ENCODE measurements at regions of chr17 and their contacts with region 1.

Region 1: GRCh38 chr17:63773381-63774140 is at the start of gene CCDC47:
- DNase-seq: peak; percentile 97 to 99
- ATAC-seq: peak; percentile 94 to 97 (median 97)
- H3K4me3 ChIP-seq: peak within 1 kb of the TSS; percentile 67 to 99 (median 92)
- H3K27ac ChIP-seq: peak within 1 kb of the TSS; percentile 81 to 99 (median 96)
- H3K4me1 ChIP-seq: peaks cover 0 to 74% (median 67%) of the 10 kb centered on the region in 9 donors
- H3K27me3 ChIP-seq: no peaks in the 10 kb centered on the region
- CTCF ChIP-seq: no peak
- total RNA-seq, gene CCDC47: 76.7 to 153 (median 90.6) TPM

Region 2: DNA sequence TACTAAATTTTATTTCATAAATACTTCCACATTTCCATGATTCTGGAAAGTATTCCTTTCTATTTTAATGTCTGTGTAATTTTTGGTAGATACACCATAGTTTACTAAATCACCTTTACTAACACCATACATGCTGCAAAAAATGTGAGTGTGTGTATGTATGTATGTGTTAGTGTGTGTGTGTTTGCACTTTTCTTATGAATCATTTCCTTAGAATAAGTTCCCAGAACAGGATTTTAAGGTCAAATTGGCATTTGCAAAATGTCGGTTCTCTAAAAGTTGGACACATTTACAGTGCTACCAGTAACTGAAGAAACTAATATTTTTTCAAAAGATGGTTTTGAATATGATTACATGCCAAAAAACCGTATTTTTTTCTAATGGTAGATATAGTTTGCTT is 464.5 kb before region 1 on chr17:
- intact Hi-C with region 1: no loop called
- DNase-seq: no peak
- ATAC-seq: no peak
- H3K4me3 ChIP-seq: no peak overlapping the region
- H3K27ac ChIP-seq: no peak overlapping the region
- H3K4me1 ChIP-seq: no peaks in the 10 kb centered on the region
- H3K27me3 ChIP-seq: peaks cover 0 to 6% (median 0%) of the 10 kb centered on the region in 7 donors
- CTCF ChIP-seq: no peak

Region 3: GRCh38 chr17:63741221-63742049 is 32.1 kb before region 1 on chr17 and contains the start of gene STRADA:
- intact Hi-C with region 1: loop called in 1 of 10 experiments (anchors 1 kb)
- DNase-seq: peak; percentile 98 to 99
- ATAC-seq: peak; percentile 99 to 100 (median 100)
- H3K4me3 ChIP-seq: peak within 1 kb of the TSS; percentile 69 to 97 (median 84)
- H3K27ac ChIP-seq: peak within 1 kb of the TSS; percentile 72 to 96 (median 92)
- H3K4me1 ChIP-seq: peaks cover 6 to 22% (median 16%) of the 10 kb centered on the region in 9 donors
- H3K27me3 ChIP-seq: no peaks in the 10 kb centered on the region
- CTCF ChIP-seq: peak in 1 of 9 donors; percentile 19
- total RNA-seq, gene STRADA: 12.2 to 19.0 (median 17.7) TPM

Region 4: DNA sequence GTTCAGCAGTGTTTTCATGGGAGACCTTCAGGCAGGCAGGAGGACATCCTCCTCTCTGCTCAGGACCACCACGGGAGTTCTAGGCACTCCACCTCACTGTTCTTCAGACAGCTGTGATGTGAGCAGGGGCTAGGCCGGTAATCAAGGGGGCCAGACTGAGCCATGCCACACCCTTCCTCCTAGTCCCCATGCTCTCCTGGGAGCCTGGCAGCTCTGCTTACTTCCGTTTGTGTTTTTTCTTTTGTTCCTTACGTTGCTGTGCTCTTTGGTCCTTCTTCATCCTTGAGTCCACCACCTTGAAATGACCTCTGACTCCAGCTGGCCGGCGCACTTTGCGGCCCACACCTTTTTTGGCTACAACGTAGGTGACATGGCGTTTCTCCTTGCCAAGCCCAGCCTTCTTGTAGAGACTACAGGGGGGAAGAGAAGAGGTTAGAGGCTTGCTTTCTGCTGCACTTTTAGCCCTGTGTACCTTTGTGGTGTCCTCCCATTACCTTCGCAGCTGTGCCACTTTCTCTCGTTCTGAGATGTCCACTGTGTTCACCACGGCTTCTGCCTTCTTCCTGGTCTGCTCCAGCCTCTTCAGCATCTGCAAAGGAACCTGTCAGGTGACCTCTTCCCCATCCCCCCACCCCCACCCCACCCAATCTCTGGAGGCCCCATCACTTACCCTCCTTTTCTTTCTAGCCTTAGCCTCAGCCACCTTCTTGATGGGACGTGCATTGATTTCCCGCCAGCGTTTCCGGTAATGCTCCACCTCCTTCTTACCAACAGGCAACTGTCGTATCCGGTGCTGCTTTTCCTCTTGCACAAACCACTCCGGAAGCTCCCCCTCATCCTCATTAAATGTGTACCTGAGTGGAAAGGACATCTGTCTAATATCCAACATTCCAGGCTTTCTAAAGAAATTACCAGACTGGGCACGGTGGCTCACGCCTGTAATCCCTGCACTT is 46.3 kb after region 1 on chr17:
- intact Hi-C with region 1: loop called in 4 of 10 experiments (anchors 5 to 10 kb)
- DNase-seq: no peak
- ATAC-seq: peak in 5 of 8 donors; percentile 16 to 53 (median 28)
- H3K4me3 ChIP-seq: no peak overlapping the region
- H3K27ac ChIP-seq: peak overlapping the region in 7 of 10 donors; percentile 27 to 59 (median 49)
- H3K4me1 ChIP-seq: peaks cover 0 to 14% (median 7%) of the 10 kb centered on the region in 9 donors
- H3K27me3 ChIP-seq: no peaks in the 10 kb centered on the region
- CTCF ChIP-seq: no peak

Region 5: GRCh38 chr17:63827002-63827771 is 53.6 kb after region 1 on chr17 and contains the starts of genes FTSJ3 and PSMC5:
- intact Hi-C with region 1: loop called in 3 of 10 experiments (anchors 5 to 10 kb)
- DNase-seq: peak; percentile 94 to 97
- ATAC-seq: peak; percentile 93 to 98 (median 96)
- H3K4me3 ChIP-seq: peak within 1 kb of the TSS; percentile 69 to 98 (median 86)
- H3K27ac ChIP-seq: peak within 1 kb of the TSS; percentile 84 to 98 (median 94)
- H3K4me1 ChIP-seq: peaks cover 5 to 35% (median 29%) of the 10 kb centered on the region in 9 donors
- H3K27me3 ChIP-seq: no peaks in the 10 kb centered on the region
- CTCF ChIP-seq: peak in 7 of 9 donors; percentile 17 to 71 (median 59)
- total RNA-seq, gene FTSJ3: 17.5 to 43.0 (median 28.4) TPM
- total RNA-seq, gene PSMC5: 92.9 to 153 (median 119) TPM

Region 6: DNA sequence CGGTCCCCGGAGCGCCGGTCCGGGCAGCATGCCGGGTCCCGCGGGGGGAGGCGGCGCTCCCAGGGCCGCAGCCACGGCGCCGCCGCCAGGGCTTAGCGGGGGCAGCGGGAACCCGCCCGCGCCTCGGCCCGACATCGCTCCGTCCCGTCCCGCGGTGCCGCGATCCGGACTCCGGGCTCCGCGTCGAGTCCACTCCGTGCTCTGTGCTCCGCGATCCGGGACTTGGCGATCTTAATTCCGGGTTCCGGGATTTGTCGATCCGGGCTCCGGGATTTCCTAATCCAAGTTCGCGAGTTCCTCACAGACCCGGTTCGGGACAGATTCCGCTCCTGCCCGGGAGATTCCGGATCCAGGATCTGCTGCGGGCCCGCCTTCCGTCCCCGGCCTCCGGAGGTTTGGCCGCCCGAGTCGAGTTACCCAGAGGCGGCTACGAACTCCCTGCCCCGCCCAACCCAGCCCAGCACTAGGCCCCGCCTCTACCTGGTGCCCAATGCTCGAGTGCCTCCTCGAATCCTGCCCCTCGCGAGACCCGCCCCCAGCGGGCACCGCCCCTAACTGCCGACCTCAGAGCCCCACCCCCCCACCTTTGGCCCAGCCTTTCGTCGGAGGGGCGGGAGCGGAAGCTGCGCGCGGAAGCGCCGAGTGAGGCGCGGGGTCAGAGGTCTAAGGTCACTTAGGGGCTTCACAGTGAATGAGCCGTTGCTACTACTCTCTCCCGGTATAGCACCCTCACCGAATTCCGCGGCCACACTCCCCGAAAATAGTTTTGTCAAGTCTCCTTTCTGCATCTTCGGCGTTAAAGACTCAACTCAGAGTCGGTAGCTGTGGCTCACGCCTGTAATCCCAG is 69.2 kb after region 1 on chr17 and contains the start of gene SMARCD2:
- intact Hi-C with region 1: loop called in 1 of 10 experiments (anchors 5 kb)
- DNase-seq: peak; percentile 98 to 99
- ATAC-seq: peak; percentile 88 to 94 (median 90)
- H3K4me3 ChIP-seq: peak within 1 kb of the TSS; percentile 73 to 95 (median 90)
- H3K27ac ChIP-seq: peak within 1 kb of the TSS; percentile 87 to 98 (median 94)
- H3K4me1 ChIP-seq: peaks cover 30 to 53% (median 47%) of the 10 kb centered on the region in 9 donors
- H3K27me3 ChIP-seq: no peaks in the 10 kb centered on the region
- CTCF ChIP-seq: peak in 2 of 9 donors; percentile 6
- total RNA-seq, gene SMARCD2: 11.6 to 35.7 (median 17.3) TPM

Measured in heart right ventricle (tissue), 16 donors.